ENCODE measurements at regions of chr1 and their contacts with region 1.

Region 1: GRCh38 chr1:25031966-25032667 is 102.0 kb upstream of the RUNX3 start:
- DNase-seq: peak; percentile 61
- ATAC-seq: peak; percentile 50
- H3K4me3 Mint-ChIP-seq: peak overlapping the region; percentile 80
- H3K27ac Mint-ChIP-seq: peak overlapping the region; percentile 97
- H3K4me1 Mint-ChIP-seq: peaks cover 3% of the 10 kb centered on the region
- H3K27me3 Mint-ChIP-seq: no peaks in the 10 kb centered on the region
- CTCF ChIP-seq: no peak

Region 2: DNA sequence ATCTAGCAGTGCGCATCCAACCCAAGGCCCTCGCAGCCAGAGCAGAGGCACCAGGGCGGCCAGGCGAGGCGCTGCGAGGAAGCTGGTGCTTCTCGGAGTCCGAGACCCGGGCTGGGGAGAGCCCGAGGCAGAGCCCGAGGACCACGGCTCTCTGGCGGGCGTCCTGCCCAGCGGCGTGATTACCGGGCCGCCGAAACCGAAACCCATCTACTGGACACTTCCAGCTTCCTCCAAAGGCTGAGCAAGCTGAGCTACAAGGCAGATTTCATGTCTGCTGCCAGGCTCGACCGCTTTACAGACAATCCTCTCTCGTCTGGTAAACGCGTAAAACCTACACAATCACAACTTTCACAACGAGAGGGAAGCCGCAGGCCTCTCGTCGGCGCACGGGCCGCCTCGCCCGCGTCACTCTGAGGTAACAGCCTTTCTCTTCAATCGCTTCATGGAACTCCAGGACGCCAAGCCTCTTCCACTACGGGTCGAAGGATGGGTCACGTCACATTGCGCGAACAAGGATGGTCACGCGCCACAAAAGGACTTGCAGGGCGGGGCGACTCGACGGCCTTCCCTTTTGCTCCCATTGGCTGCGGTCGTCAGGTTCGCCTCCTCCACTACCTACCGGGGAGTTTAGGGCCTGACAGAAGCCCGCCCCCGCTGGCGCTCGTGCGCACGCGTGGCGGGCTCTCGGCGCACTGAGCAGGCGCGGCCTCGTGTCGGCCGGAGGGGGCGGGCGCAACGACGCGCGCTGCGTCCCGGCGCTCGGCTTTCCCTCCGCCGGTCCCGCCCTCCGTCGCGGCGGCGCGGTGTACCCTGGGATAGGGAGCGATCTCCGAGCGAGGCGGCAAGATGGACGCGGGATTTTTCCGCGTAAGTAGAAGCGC is 389.4 kb before region 1 on chr1 and contains the start of gene SRRM1:
- CTCF ChIA-PET with region 1: no interaction called
- POLR2A ChIA-PET with region 1: no interaction called
- intact Hi-C with region 1: loop called (anchors 5 kb)
- DNase-seq: peak; percentile 96
- ATAC-seq: peak; percentile 90
- H3K4me3 Mint-ChIP-seq: peak within 1 kb of the TSS; percentile 96
- H3K27ac Mint-ChIP-seq: peak within 1 kb of the TSS; percentile 99
- H3K4me1 Mint-ChIP-seq: peaks cover 38% of the 10 kb centered on the region
- H3K27me3 Mint-ChIP-seq: no peaks in the 10 kb centered on the region
- CTCF ChIP-seq: no peak
- total RNA-seq, gene SRRM1: 214 and 220 TPM in 2 replicates

Region 3: GRCh38 chr1:24935615-24936484 is 96.3 kb before region 1 on chr1:
- CTCF ChIA-PET with region 1: interaction called, 195 read pairs
- POLR2A ChIA-PET with region 1: interaction called, 385 read pairs
- intact Hi-C with region 1: loop called (anchors 1 kb)
- DNase-seq: no peak
- ATAC-seq: no peak
- H3K4me3 Mint-ChIP-seq: peak overlapping the region; percentile 32
- H3K27ac Mint-ChIP-seq: peak overlapping the region; percentile 46
- H3K4me1 Mint-ChIP-seq: peaks cover 47% of the 10 kb centered on the region
- H3K27me3 Mint-ChIP-seq: no peaks in the 10 kb centered on the region
- CTCF ChIP-seq: no peak

Region 4: DNA sequence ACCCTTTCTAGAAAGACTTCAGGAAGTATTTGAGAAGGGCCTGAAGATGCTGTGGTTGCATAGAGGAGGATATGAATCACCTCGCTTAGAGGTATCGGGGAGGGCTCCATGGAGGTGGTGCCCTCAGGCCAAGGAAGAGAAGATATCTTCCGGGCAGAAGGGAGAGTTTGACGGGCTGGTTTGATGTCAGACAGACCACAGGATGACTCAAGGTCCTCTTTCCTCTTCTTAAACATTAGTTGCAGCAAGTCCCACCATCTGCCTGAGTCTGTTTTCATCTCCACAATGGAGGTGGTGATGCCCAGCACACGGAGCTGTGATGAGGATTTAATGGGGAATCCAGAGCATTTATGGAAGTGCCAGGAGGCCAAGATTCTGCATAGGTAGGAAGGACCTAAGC is 77.0 kb before region 1 on chr1:
- CTCF ChIA-PET with region 1: interaction called, 80 read pairs
- POLR2A ChIA-PET with region 1: interaction called, 42 read pairs
- intact Hi-C with region 1: loop called (anchors 1 kb)
- DNase-seq: no peak
- ATAC-seq: peak; percentile 76
- H3K4me3 Mint-ChIP-seq: peak overlapping the region; percentile 78
- H3K27ac Mint-ChIP-seq: peak overlapping the region; percentile 87
- H3K4me1 Mint-ChIP-seq: peaks cover 87% of the 10 kb centered on the region
- H3K27me3 Mint-ChIP-seq: no peaks in the 10 kb centered on the region
- CTCF ChIP-seq: no peak

Region 5: GRCh38 chr1:24987875-24988557 is 44.1 kb before region 1 on chr1:
- CTCF ChIA-PET with region 1: interaction called, 11 read pairs
- POLR2A ChIA-PET with region 1: interaction called, 24 read pairs
- intact Hi-C with region 1: loop called (anchors 1 kb)
- DNase-seq: no peak
- ATAC-seq: peak; percentile 92
- H3K4me3 Mint-ChIP-seq: peak overlapping the region; percentile 61
- H3K27ac Mint-ChIP-seq: peak overlapping the region; percentile 85
- H3K4me1 Mint-ChIP-seq: peaks cover 34% of the 10 kb centered on the region
- H3K27me3 Mint-ChIP-seq: no peaks in the 10 kb centered on the region
- CTCF ChIP-seq: no peak

Region 6: GRCh38 chr1:25223471-25223870 is 191.4 kb after region 1 on chr1:
- CTCF ChIA-PET with region 1: no interaction called
- POLR2A ChIA-PET with region 1: no interaction called
- intact Hi-C with region 1: no loop called
- DNase-seq: no peak
- ATAC-seq: no peak
- H3K4me3 Mint-ChIP-seq: no peak overlapping the region
- H3K27ac Mint-ChIP-seq: no peak overlapping the region
- H3K4me1 Mint-ChIP-seq: no peaks in the 10 kb centered on the region
- H3K27me3 Mint-ChIP-seq: no peaks in the 10 kb centered on the region
- CTCF ChIP-seq: no peak